Sciatic nerve (tissue), 2 donors: ENCODE measurements at regions of chr4 and their contacts with region 1.

Region 1: DNA sequence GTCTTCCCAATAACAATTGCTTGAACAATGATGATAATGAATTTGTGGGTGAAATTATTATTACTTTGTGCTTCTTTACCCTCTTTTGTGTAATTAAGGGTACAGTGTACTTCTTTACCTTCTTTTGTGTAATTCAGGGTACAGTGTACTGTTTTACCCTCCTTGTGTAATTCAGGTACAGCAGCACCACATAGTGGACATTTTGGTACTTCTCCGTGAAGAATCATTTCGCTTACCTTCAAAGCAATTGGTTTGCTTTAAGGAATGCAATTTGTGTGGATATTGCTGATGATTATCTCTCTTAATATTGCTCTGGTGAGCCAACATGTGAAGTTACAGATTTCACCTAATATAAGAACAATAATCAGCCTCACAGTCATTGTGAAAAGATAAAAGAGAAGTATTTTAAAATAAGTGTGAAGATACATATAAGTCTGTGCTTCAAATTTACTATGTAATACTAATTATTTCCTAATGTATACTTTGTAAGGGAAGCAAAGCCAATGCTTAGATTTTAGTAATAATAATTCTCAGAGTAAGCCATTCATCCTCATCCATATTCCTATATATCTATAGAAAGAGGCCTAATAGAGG is 27.2 kb upstream of the SEC24B start:
- DNase-seq: no peak
- ATAC-seq: peak; percentile 60

Region 2: DNA sequence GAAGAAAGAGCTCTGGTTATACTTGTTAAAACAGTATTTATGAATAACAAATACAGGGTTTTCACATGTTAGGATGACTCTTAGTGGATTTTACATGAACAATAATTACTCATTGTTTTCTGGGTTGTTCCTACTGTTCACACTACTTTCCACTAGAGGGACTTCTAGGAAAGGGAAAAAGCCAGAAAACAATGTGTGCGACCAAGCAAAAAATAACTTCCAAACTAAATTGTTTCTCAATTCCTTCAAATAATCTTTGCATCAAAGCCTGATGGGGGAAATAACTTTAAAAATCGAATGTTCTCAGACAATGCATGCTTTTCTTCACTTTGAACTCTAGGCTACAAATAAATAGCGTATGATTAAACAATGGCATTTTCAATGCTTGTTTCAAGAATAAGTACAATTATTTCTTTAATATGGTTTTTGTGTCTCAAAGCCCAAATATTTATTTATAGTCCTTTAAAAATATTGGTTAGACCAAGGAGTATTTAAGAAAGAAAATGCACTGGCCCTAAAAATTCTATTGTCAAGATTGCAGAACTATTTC is 571.5 kb before region 1 on chr4:
- intact Hi-C with region 1: loop called (anchors 10 kb)
- DNase-seq: no peak
- ATAC-seq: peak; percentile 60